ENCODE measurements at regions of chr17 and their contacts with region 1.

Region 1: GRCh38 chr17:39352511-39352910 is 48.9 kb downstream of the FBXL20 start:
- DNase-seq: no peak
- ATAC-seq: no peak
- H3K4me3 Mint-ChIP-seq: no peak overlapping the region
- H3K27ac Mint-ChIP-seq: no peak overlapping the region
- H3K4me1 Mint-ChIP-seq: peaks cover 4% of the 10 kb centered on the region
- H3K27me3 Mint-ChIP-seq: no peaks in the 10 kb centered on the region
- CTCF ChIP-seq: no peak

Region 2: DNA sequence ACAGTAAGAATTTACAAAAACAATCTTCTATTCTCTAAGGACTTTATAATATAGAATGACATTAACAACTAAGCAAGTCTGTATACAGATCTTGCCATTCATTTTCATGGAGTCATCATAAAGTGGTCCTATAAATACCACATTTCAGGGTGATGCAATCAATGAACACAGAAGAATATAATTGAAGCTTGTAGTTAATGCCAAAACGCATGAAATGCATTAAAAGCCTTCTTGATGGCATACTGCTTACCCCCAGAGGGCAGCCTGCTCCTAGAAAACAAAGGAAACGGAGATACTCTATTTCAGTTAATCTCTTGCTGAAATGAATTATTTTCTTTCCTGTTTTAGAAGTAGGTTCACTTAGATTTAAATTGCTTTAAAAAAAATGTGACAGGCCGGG is 81.6 kb before region 1 on chr17:
- CTCF ChIA-PET with region 1: no interaction called
- POLR2A ChIA-PET with region 1: no interaction called
- intact Hi-C with region 1: loop called (anchors 1 kb)
- DNase-seq: no peak
- ATAC-seq: no peak
- H3K4me3 Mint-ChIP-seq: no peak overlapping the region
- H3K27ac Mint-ChIP-seq: no peak overlapping the region
- H3K4me1 Mint-ChIP-seq: peaks cover under 1% of the 10 kb centered on the region
- H3K27me3 Mint-ChIP-seq: no peaks in the 10 kb centered on the region
- CTCF ChIP-seq: no peak

Region 3: GRCh38 chr17:39365242-39365641 is 12.7 kb after region 1 on chr17:
- CTCF ChIA-PET with region 1: no interaction called
- POLR2A ChIA-PET with region 1: no interaction called
- intact Hi-C with region 1: no loop called
- DNase-seq: no peak
- ATAC-seq: no peak
- H3K4me3 Mint-ChIP-seq: no peak overlapping the region
- H3K27ac Mint-ChIP-seq: no peak overlapping the region
- H3K4me1 Mint-ChIP-seq: peaks cover 3% of the 10 kb centered on the region
- H3K27me3 Mint-ChIP-seq: no peaks in the 10 kb centered on the region
- CTCF ChIP-seq: no peak

Region 4: GRCh38 chr17:39485555-39485954 is 133.0 kb after region 1 on chr17:
- CTCF ChIA-PET with region 1: no interaction called
- POLR2A ChIA-PET with region 1: no interaction called
- intact Hi-C with region 1: no loop called
- DNase-seq: no peak
- ATAC-seq: no peak
- H3K4me3 Mint-ChIP-seq: no peak overlapping the region
- H3K27ac Mint-ChIP-seq: no peak overlapping the region
- H3K4me1 Mint-ChIP-seq: peaks cover 18% of the 10 kb centered on the region
- H3K27me3 Mint-ChIP-seq: no peaks in the 10 kb centered on the region
- CTCF ChIP-seq: no peak

Measured in activated B cell treated with CpG ODN at 0.5 μM for 24 hours (primary cell).